AG04449 (cell line): ENCODE measurements at regions of chr6 and their contacts with region 1.

Region 1: GRCh38 chr6:130076512-130076911 is 58.1 kb downstream of the L3MBTL3 start:
- DNase-seq: no peak
- H3K4me3 ChIP-seq: no peak overlapping the region
- CTCF ChIP-seq: peak; percentile 6

Region 2: GRCh38 chr6:129567374-129567773 is 509.1 kb before region 1 on chr6:
- CTCF ChIA-PET with region 1: no interaction called
- POLR2A ChIA-PET with region 1: no interaction called
- DNase-seq: no peak
- H3K4me3 ChIP-seq: no peak overlapping the region
- CTCF ChIP-seq: peak; percentile 5

Region 3: GRCh38 chr6:130047088-130047995 is 29.2 kb before region 1 on chr6:
- CTCF ChIA-PET with region 1: no interaction called
- POLR2A ChIA-PET with region 1: no interaction called
- DNase-seq: no peak
- H3K4me3 ChIP-seq: no peak overlapping the region
- CTCF ChIP-seq: no peak

Region 4: DNA sequence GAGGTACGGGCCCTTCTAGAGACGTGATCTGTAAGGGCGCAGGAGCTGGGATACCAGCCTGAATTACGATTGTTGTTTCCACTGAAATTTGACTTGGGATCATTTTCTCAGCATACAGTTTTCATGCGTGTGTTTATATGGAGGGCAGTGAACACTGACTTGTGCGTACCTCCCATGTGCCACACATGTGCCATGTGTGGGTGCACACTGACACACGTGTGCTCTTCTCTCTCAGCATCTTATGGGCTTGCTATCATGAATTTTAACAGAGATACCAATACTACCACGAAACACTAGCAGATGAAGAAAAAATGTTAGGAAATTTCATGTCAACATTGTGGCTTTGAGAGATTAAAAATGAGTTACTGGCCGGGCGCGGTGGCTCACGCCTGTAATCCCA is 19.0 kb before region 1 on chr6:
- CTCF ChIA-PET with region 1: no interaction called
- POLR2A ChIA-PET with region 1: no interaction called
- DNase-seq: no peak
- H3K4me3 ChIP-seq: no peak overlapping the region
- CTCF ChIP-seq: no peak

Region 5: GRCh38 chr6:130090796-130091195 is 14.3 kb after region 1 on chr6:
- CTCF ChIA-PET with region 1: interaction called, 10 read pairs
- POLR2A ChIA-PET with region 1: no interaction called
- DNase-seq: no peak
- H3K4me3 ChIP-seq: no peak overlapping the region
- CTCF ChIP-seq: no peak

Region 6: GRCh38 chr6:130282234-130282995 is 205.9 kb after region 1 on chr6:
- CTCF ChIA-PET with region 1: interaction called, 14 read pairs
- POLR2A ChIA-PET with region 1: no interaction called
- DNase-seq: no peak
- H3K4me3 ChIP-seq: no peak overlapping the region
- CTCF ChIP-seq: peak; percentile 55